CD4-positive, alpha-beta memory T cell (primary cell): ENCODE measurements at regions of chr5 and their contacts with region 1.

Region 1: DNA sequence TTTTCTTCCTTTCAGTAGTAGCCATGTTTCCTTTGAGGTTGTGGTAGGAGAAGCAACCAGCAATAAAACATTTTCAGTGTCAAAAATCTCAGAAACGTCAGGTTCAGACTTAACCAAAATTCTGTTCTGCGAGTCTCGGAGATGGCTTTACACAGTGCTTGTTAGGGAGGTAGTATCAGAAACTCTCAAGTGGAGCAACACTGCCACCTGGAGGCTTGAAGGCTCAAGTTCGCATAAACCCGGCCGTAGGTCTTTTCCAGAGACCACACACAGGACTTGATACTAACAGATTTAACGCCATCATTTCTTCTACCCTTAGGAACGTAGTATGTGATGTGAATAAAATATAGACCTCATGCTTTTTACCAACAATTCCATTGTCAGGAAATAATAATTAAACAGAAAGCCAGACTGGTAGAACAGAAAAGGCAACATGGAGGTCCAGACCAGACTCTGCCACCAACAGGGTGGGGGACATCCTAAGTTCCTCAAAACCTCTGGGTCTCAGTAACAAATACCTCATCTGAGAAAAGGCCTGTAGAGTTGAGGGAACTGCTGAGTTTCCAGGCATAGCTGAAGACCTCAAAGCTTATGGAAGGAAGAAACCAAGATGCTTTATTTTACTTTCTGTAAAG is 8.5 kb downstream of the PTGER4 start:
- DNase-seq: peak; percentile 81 to 88 (median 84)
- H3K4me3 ChIP-seq: peak overlapping the region in 1 of 2 donors; percentile 46
- H3K4me3 Mint-ChIP-seq: peak overlapping the region; percentile 92 to 100 (median 99)
- H3K27ac ChIP-seq: peak overlapping the region; percentile 59
- H3K27ac Mint-ChIP-seq: peak overlapping the region; percentile 91 to 98 (median 95)
- H3K4me1 ChIP-seq: peaks cover 81% of the 10 kb centered on the region
- H3K4me1 Mint-ChIP-seq: peaks cover 51 to 89% (median 73%) of the 10 kb centered on the region in 4 donors
- H3K27me3 ChIP-seq: no peaks in the 10 kb centered on the region
- H3K27me3 Mint-ChIP-seq: no peaks in the 10 kb centered on the region

Region 2: DNA sequence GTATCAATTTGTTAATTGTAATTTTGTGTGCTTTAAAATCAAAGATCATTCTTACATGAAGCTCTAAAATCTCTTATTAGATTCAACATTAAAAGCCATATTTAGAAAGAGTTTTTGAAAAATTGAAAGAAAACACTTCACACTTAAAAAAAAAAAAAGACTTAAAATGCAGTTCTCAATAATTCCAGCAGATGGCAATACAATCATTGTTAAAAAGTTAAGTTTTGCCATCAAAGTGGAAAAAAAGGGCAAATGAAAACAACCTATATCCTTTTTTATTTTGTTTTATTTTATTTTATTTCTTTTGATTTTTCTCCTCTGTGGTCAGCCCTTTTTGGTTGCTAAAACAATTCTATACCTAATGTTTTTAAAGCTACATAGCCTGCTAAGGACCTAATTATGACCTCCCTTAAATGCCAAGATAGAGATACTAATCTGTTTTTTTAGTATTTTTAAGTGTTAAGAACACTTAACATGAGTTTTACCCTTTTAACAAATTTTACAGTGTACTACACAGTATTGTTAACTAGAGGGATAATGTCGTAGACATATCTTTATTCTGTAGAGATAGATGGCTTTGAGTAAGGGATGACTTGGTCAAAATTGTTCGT is 1109.3 kb before region 1 on chr5:
- CTCF ChIA-PET with region 1: interaction called, 5 read pairs
- POLR2A ChIA-PET with region 1: no interaction called
- intact Hi-C with region 1: loop called (anchors 1 kb)
- DNase-seq: peak in 4 of 5 donors; percentile 15 to 26 (median 19)
- H3K4me3 ChIP-seq: no peak overlapping the region
- H3K4me3 Mint-ChIP-seq: peak overlapping the region in 1 of 8 donors; percentile 32
- H3K27ac ChIP-seq: no peak overlapping the region
- H3K27ac Mint-ChIP-seq: no peak overlapping the region
- H3K4me1 ChIP-seq: peaks cover 10% of the 10 kb centered on the region
- H3K4me1 Mint-ChIP-seq: peaks cover 4 to 11% (median 6%) of the 10 kb centered on the region in 4 donors
- H3K27me3 ChIP-seq: no peaks in the 10 kb centered on the region
- H3K27me3 Mint-ChIP-seq: peaks cover 0 to 2% of the 10 kb centered on the region in 2 donors

Region 3: DNA sequence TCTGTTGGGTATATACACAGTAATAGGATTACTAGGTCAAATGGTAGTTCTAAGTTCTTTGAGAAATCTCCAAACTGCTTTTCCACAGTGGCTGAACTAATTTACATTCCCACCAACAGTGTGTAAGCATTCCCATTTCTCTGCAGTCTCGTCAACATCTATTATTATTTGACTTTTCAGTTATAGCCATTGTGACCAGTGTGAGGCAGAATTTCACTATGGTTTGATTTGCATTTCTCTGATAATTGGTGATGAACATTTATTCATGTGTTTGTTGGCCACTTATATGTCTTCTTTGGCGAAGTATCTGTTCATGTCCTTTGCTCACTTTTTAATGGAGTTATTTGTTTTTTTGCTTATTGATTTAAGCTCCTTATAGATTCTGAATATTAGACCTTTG is 667.2 kb before region 1 on chr5:
- CTCF ChIA-PET with region 1: interaction called, 5 read pairs
- POLR2A ChIA-PET with region 1: no interaction called
- intact Hi-C with region 1: loop called (anchors 1 kb)
- DNase-seq: peak in 1 of 5 donors; percentile 2
- H3K4me3 ChIP-seq: no peak overlapping the region
- H3K4me3 Mint-ChIP-seq: no peak overlapping the region
- H3K27ac ChIP-seq: no peak overlapping the region
- H3K27ac Mint-ChIP-seq: peak overlapping the region in 1 of 7 donors; percentile 53
- H3K4me1 ChIP-seq: no peaks in the 10 kb centered on the region
- H3K4me1 Mint-ChIP-seq: no peaks in the 10 kb centered on the region
- H3K27me3 ChIP-seq: no peaks in the 10 kb centered on the region
- H3K27me3 Mint-ChIP-seq: no peaks in the 10 kb centered on the region

Region 4: GRCh38 chr5:40386289-40386688 is 302.0 kb before region 1 on chr5:
- CTCF ChIA-PET with region 1: interaction called, 18 read pairs
- POLR2A ChIA-PET with region 1: interaction called, 15 read pairs
- intact Hi-C with region 1: loop called (anchors 1 kb)
- DNase-seq: peak in 4 of 5 donors; percentile 55 to 68 (median 57)
- H3K4me3 ChIP-seq: no peak overlapping the region
- H3K4me3 Mint-ChIP-seq: peak overlapping the region in 6 of 8 donors; percentile 9 to 76 (median 51)
- H3K27ac ChIP-seq: peak overlapping the region; percentile 28
- H3K27ac Mint-ChIP-seq: peak overlapping the region; percentile 70 to 96 (median 84)
- H3K4me1 ChIP-seq: peaks cover 91% of the 10 kb centered on the region
- H3K4me1 Mint-ChIP-seq: peaks cover 75 to 93% (median 82%) of the 10 kb centered on the region in 4 donors
- H3K27me3 ChIP-seq: no peaks in the 10 kb centered on the region
- H3K27me3 Mint-ChIP-seq: no peaks in the 10 kb centered on the region

Region 5: GRCh38 chr5:40410231-40410861 is 277.9 kb before region 1 on chr5:
- CTCF ChIA-PET with region 1: interaction called, 14 read pairs
- POLR2A ChIA-PET with region 1: interaction called, 194 read pairs
- intact Hi-C with region 1: loop called (anchors 1 kb)
- DNase-seq: peak; percentile 88 to 97 (median 97)
- H3K4me3 ChIP-seq: peak overlapping the region in 1 of 2 donors; percentile 50
- H3K4me3 Mint-ChIP-seq: peak overlapping the region; percentile 65 to 89 (median 80)
- H3K27ac ChIP-seq: peak overlapping the region; percentile 95
- H3K27ac Mint-ChIP-seq: peak overlapping the region; percentile 86 to 100 (median 99)
- H3K4me1 ChIP-seq: peaks cover 65% of the 10 kb centered on the region
- H3K4me1 Mint-ChIP-seq: peaks cover 38 to 72% (median 52%) of the 10 kb centered on the region in 4 donors
- H3K27me3 ChIP-seq: no peaks in the 10 kb centered on the region
- H3K27me3 Mint-ChIP-seq: no peaks in the 10 kb centered on the region

Region 6: GRCh38 chr5:40475561-40475960 is 212.7 kb before region 1 on chr5:
- CTCF ChIA-PET with region 1: no interaction called
- POLR2A ChIA-PET with region 1: no interaction called
- intact Hi-C with region 1: no loop called
- DNase-seq: no peak
- H3K4me3 ChIP-seq: no peak overlapping the region
- H3K4me3 Mint-ChIP-seq: no peak overlapping the region
- H3K27ac ChIP-seq: no peak overlapping the region
- H3K27ac Mint-ChIP-seq: no peak overlapping the region
- H3K4me1 ChIP-seq: no peaks in the 10 kb centered on the region
- H3K4me1 Mint-ChIP-seq: peaks cover 4 to 7% (median 6%) of the 10 kb centered on the region in 4 donors
- H3K27me3 ChIP-seq: no peaks in the 10 kb centered on the region
- H3K27me3 Mint-ChIP-seq: no peaks in the 10 kb centered on the region

Region 7: DNA sequence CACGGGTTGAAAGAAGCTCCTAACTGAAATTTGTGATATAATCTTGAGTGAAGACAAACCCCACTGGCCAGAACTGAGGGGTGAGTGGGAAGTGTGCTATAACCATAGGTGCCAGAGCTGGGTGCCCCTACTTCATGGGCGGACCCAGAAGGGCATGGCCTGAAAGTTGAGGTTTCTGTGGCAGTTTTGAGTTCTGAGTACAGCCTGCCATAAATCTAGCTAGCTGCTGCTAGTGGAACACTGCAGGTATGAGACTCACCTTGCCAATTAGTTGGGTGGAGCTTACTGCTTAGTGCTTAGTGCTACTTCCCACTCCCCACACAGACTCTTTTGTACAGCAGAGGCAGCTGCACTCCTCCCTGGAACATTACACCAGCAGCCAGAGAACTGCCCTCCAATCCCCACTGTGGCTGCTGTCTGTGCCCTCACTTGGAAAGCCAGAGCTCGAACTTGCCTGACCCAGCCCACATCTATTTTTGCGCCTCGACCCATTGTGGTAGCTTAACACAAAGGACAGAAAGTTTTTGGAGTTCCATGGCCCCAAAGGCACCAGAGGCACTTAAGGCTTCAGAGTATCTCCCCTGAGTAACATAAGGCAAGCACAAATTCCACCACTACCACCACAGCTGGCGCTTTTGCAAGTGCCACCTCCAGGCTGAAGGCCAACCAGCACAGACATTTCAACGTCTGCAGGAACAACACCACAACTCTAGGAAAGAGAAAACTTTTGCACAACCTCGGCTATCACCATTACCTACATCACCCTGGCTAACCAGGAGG is 35.6 kb before region 1 on chr5:
- CTCF ChIA-PET with region 1: interaction called, 58 read pairs
- POLR2A ChIA-PET with region 1: interaction called, 19 read pairs
- intact Hi-C with region 1: no loop called
- DNase-seq: peak in 2 of 5 donors; percentile 19 to 30
- H3K4me3 ChIP-seq: no peak overlapping the region
- H3K4me3 Mint-ChIP-seq: peak overlapping the region; percentile 63 to 90 (median 84)
- H3K27ac ChIP-seq: peak overlapping the region; percentile 55
- H3K27ac Mint-ChIP-seq: peak overlapping the region; percentile 84 to 97 (median 93)
- H3K4me1 ChIP-seq: peaks cover 82% of the 10 kb centered on the region
- H3K4me1 Mint-ChIP-seq: peaks cover 53 to 89% (median 73%) of the 10 kb centered on the region in 4 donors
- H3K27me3 ChIP-seq: no peaks in the 10 kb centered on the region
- H3K27me3 Mint-ChIP-seq: no peaks in the 10 kb centered on the region

Region 8: DNA sequence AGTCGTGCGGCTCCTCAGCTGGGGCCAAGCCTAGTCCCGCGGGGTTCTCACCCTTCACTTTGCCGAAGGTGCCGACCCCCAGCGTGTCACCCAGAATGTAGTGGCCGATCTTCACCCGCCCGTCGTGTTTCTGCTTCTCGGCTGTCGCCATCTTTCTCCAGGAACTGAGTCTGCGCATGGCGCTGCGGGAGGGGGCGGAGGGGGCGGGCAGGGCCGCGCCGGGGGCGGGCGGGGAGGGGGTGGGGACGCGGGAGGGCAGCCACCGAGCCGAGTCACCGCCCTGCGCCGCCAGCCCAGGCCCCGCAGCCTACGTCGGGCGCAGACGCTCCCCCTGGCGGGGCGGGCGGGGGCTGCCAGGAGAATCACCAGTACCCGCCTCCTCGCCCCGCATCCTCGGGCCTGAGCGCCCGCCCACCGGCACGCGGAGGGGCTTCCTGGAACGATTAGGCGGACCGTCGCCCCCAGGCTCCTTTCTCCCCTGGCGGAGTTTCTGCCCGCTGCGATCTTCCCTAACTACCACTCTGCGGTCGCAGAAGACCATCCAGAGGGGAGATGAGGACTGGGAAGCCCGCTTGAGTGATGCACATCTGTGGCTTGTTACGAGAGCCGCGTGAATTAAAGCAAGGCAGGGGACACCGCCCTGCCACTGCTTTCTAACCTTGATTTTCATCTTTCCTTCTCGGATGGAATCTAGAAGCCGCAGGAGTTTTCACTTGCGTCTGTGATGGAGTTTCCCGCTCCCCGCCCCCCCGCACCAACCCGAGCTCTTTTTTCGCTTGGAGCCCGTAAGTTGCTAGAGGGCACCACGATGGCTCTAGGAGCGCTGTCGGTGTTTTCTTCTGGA is 110.0 kb after region 1 on chr5 and contains the start of gene PRKAA1:
- CTCF ChIA-PET with region 1: no interaction called
- POLR2A ChIA-PET with region 1: no interaction called
- intact Hi-C with region 1: no loop called
- DNase-seq: peak; percentile 88 to 93 (median 91)
- H3K4me3 ChIP-seq: peak within 1 kb of the TSS; percentile 71 to 91
- H3K4me3 Mint-ChIP-seq: peak within 1 kb of the TSS; percentile 91 to 97 (median 94)
- H3K27ac ChIP-seq: peak within 1 kb of the TSS; percentile 91
- H3K27ac Mint-ChIP-seq: peak within 1 kb of the TSS; percentile 91 to 98 (median 95)
- H3K4me1 ChIP-seq: peaks cover 34% of the 10 kb centered on the region
- H3K4me1 Mint-ChIP-seq: peaks cover 27 to 52% (median 42%) of the 10 kb centered on the region in 4 donors
- H3K27me3 ChIP-seq: no peaks in the 10 kb centered on the region
- H3K27me3 Mint-ChIP-seq: no peaks in the 10 kb centered on the region
- total RNA-seq, gene PRKAA1: 113 to 120 TPM

Region 9: GRCh38 chr5:40879163-40879942 is 191.1 kb after region 1 on chr5:
- CTCF ChIA-PET with region 1: interaction called, 4 read pairs
- POLR2A ChIA-PET with region 1: no interaction called
- intact Hi-C with region 1: loop called (anchors 2 kb)
- DNase-seq: peak in 4 of 5 donors; percentile 29 to 37 (median 34)
- H3K4me3 ChIP-seq: no peak overlapping the region
- H3K4me3 Mint-ChIP-seq: peak overlapping the region in 2 of 8 donors; percentile 31 to 43
- H3K27ac ChIP-seq: no peak overlapping the region
- H3K27ac Mint-ChIP-seq: no peak overlapping the region
- H3K4me1 ChIP-seq: no peaks in the 10 kb centered on the region
- H3K4me1 Mint-ChIP-seq: peaks cover 0 to 2% (median 1%) of the 10 kb centered on the region in 4 donors
- H3K27me3 ChIP-seq: no peaks in the 10 kb centered on the region
- H3K27me3 Mint-ChIP-seq: peaks cover under 1 to 3% of the 10 kb centered on the region in 2 donors